Posterior vena cava (tissue), 2 donors: ENCODE measurements at regions of chr4 and their contacts with region 1.

Region 1: DNA sequence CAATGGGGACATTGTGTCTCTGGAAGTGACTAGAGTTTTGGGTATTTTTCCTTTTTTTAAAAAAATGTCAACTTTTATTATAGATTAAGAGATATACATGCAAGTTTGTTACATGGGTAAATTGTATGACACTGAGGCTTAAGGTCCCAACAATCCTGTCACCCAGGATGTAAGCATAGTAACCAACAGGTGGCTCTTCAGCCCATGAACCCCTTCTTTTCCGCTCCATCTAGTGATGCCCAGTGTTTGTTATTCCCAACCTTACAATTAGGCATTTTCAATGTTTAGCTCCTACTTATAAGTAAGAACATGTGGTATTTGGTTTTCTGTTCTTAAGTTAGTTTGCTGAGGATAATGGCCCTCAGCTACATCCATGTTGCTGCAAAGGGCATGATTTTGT is 102.7 kb downstream of the GRID2 start:
- DNase-seq: no peak

Region 2: GRCh38 chr4:90855111-90855510 is 1551.4 kb before region 1 on chr4:
- intact Hi-C with region 1: loop called in 1 of 2 experiments (anchors 5 kb)
- DNase-seq: no peak

Region 3: GRCh38 chr4:92120810-92121498 is 285.5 kb before region 1 on chr4:
- intact Hi-C with region 1: no loop called
- DNase-seq: no peak

Region 4: DNA sequence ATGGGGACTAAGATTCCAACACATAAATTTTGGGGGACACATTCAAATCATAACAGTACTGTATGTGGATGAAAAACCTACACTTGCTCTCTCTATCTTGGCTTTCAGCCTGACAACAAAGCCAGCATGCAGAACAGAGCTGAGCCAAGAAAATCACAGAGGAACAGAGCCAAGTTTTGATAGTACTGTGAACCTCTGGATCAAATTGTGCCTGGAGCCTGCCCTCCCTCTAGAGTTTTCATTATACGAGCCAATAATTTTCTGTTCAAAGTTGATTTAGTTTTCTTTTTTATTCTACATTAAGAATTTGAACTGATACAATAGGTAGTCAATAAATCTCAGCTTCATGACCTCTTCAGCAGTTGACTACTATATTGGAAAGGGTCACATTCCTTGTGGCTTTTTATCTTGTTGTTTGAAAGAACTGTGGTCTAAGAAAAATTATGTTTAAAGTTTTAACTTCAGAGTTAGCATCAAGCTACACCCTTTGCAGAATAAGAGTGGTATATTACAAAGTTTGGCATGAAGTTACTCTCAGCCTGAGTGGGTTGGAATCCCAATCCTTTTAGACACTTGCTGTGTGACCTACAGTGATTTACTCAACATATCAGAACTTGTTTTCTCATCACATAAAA is 71.7 kb before region 1 on chr4:
- intact Hi-C with region 1: no loop called
- DNase-seq: no peak

Region 5: GRCh38 chr4:92455951-92456350 is 49.5 kb after region 1 on chr4:
- intact Hi-C with region 1: no loop called
- DNase-seq: no peak